ENCODE measurements at regions of chr15 and their contacts with region 1.

Region 1: DNA sequence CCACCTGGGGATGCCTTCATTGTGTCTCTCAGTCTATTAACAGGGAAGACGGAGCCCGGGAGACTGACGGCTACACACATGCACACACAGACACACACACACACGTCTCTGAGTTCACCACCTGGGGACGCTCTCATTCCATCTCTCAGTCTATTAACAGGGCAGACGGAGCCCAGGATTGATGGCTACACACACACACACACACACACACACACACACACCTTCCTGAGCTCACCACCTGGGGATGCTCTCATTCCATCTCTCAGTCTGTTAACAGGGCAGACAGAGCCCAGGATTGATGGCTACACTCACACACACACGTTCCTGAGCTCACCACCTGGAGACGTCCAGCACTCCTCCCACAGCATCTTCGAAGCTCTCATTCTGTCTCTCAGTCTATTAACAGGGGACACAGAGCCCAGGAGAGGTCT is 143.9 kb downstream of the OR4M2 start:
- DNase-seq: no peak
- ATAC-seq: no peak
- H3K4me3 ChIP-seq: no peak overlapping the region
- H3K27ac ChIP-seq: no peak overlapping the region
- H3K4me1 ChIP-seq: no peaks in the 10 kb centered on the region
- H3K27me3 ChIP-seq: no peaks in the 10 kb centered on the region
- CTCF ChIP-seq: no peak; the same call in 1 of the 2 replicates

Region 2: GRCh38 chr15:20356444-20356910 is 1867.8 kb before region 1 on chr15:
- CTCF ChIA-PET with region 1: interaction called, 12 read pairs
- POLR2A ChIA-PET with region 1: no interaction called
- in situ Hi-C with region 1: no loop called
- intact Hi-C with region 1: no loop called
- DNase-seq: peak; percentile 54
- ATAC-seq: peak; percentile 80
- H3K4me3 ChIP-seq: peak overlapping the region; percentile 17; a peak in 2 of 4 replicates
- H3K27ac ChIP-seq: no peak overlapping the region
- H3K4me1 ChIP-seq: no peaks in the 10 kb centered on the region
- H3K27me3 ChIP-seq: no peaks in the 10 kb centered on the region
- CTCF ChIP-seq: peak; percentile 94

Measured in Panc1 (cell line).